ENCODE measurements at regions of chr7 and their contacts with region 1.

Region 1: DNA sequence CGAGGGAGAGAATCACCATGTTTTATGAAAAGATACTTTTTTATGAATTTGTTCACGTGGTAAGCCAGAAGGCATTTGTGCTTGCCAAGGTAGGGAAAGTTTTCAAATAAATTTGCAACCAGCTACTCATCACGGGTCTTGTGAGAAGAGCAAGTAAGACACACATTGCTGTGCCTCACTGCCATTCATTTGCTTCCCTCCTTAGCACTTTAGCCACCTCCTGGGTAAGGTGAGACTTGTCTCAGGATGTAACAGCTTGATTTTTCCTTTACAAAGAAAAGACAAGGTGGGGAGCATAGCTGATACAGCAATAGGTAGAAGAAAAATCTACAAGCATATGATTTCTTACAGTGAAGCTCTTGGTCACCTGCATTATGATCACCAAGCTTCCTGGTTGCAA is 342.4 kb upstream of the GRM3 start:
- DNase-seq: no peak
- H3K4me3 ChIP-seq: no peak overlapping the region
- H3K27ac ChIP-seq: no peak overlapping the region
- H3K4me1 ChIP-seq: peaks cover 9% of the 10 kb centered on the region
- CTCF ChIP-seq: no peak

Region 2: DNA sequence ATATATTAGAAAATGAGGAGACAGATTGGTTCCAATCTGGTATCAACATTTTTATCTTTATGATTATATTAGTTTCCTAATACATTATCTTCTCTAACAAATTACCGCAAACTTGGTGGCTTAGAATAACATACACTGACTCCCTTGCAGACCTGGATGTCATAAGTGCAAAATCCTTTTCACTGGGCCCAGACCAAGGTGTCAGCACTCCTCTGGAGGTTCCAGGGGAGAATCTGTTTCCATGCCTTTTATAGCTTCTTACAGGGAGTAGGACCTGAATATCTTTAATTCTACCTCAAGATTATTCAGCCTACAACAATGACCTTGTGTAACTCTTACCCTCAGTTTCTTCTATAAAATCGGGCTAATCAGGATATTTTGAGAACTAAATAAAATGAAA is 12.5 kb after region 1 on chr7:
- CTCF ChIA-PET with region 1: no interaction called
- POLR2A ChIA-PET with region 1: interaction called, 52 read pairs
- intact Hi-C with region 1: no loop called
- DNase-seq: no peak
- H3K4me3 ChIP-seq: no peak overlapping the region
- H3K27ac ChIP-seq: no peak overlapping the region
- H3K4me1 ChIP-seq: peaks cover 28% of the 10 kb centered on the region
- CTCF ChIP-seq: no peak

Measured in OCI-LY7 (cell line).